ENCODE measurements at regions of chr5 and their contacts with region 1.

Region 1: DNA sequence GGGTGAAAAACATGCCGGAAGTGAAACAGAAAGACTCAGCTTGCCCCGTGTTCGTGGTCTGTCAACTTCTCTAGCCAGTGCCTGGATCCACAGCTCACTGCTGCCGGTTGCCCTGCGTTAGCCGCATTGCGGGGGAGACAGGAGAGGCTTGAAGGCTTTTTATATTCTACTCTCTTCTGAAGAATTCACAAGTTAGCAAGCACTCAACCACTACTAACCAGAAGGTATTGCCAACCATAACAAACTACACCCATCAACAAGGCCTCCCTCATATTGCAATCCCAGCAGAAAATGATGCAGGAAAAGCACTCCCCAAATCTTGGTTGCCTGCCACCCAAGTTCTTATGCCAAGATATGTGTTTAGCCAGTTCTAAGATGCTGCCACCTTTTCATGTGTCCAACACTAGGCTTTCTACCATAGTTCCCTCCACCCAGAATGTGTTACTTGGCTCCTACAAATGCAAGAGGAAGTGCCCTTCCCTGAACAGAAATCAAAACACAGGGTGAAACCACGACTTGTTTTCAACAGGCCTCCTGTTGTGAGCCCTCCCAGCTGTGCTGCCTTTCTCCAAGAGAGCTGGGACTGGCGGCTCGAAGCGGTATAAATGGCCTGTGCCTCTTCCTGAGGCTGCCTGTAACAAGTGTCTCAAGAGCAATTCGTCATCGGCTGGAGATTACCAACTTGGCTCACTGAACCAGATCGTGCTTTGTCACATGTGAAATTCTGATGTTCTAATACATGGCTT is 129.0 kb downstream of the SNX18 start:
- DNase-seq: peak; percentile 91
- H3K4me3 Mint-ChIP-seq: no peak overlapping the region
- H3K27ac Mint-ChIP-seq: peak overlapping the region; percentile 44
- H3K4me1 Mint-ChIP-seq: peaks cover 52% of the 10 kb centered on the region
- H3K27me3 Mint-ChIP-seq: no peaks in the 10 kb centered on the region
- CTCF ChIP-seq: no peak

Region 2: GRCh38 chr5:54360089-54360488 is 286.4 kb before region 1 on chr5:
- CTCF ChIA-PET with region 1: no interaction called
- POLR2A ChIA-PET with region 1: no interaction called
- intact Hi-C with region 1: no loop called
- DNase-seq: peak; percentile 63
- H3K4me3 Mint-ChIP-seq: no peak overlapping the region
- H3K27ac Mint-ChIP-seq: no peak overlapping the region
- H3K4me1 Mint-ChIP-seq: peaks cover 15% of the 10 kb centered on the region
- H3K27me3 Mint-ChIP-seq: no peaks in the 10 kb centered on the region
- CTCF ChIP-seq: no peak

Region 3: DNA sequence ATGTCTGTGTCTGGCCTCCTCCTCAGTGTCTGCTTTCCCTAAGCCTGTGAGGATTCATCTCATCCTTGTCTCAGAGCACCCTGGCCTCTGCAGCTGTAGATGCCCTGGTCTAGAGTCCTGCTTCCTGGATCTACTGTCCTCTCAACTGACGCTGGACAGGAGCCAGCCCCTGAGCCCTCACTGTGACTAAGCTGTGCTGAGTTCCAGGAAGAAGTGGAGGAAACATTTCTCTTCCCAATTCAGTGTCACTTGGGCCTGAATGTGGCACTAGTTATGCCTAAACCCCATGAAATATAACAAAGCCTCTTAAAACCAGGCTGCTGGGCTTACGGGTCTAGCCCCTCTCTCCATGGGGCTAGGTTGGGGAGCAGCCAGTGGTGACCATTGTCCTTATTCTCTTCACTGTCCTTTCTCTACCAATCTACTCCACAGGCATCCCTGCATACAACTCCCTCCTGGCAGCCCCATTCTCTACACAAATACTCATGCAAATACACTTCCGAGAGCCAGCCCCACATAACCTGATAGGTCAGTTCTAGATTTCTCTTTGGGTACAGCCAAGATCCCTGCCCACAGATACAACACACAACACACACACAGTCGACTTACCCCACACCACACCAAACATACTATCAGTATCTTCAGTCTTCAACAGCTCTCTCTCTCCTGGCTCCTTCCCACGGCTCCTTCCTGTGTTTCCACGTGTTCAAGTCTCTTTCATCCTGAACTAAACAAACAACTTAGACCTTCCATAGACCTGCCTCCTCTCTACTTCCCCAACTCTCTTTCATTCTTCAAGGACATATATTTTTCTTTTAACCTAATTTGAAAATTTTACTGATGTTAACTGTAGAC is 91.8 kb after region 1 on chr5:
- CTCF ChIA-PET with region 1: no interaction called
- POLR2A ChIA-PET with region 1: interaction called, 3 read pairs
- intact Hi-C with region 1: loop called (anchors 5 kb)
- DNase-seq: peak; percentile 70
- H3K4me3 Mint-ChIP-seq: no peak overlapping the region
- H3K27ac Mint-ChIP-seq: no peak overlapping the region
- H3K4me1 Mint-ChIP-seq: peaks cover 6% of the 10 kb centered on the region
- H3K27me3 Mint-ChIP-seq: no peaks in the 10 kb centered on the region
- CTCF ChIP-seq: no peak

Region 4: GRCh38 chr5:54927097-54927746 is 280.7 kb after region 1 on chr5:
- CTCF ChIA-PET with region 1: no interaction called
- POLR2A ChIA-PET with region 1: no interaction called
- intact Hi-C with region 1: no loop called
- DNase-seq: no peak
- H3K4me3 Mint-ChIP-seq: no peak overlapping the region
- H3K27ac Mint-ChIP-seq: no peak overlapping the region
- H3K4me1 Mint-ChIP-seq: no peaks in the 10 kb centered on the region
- H3K27me3 Mint-ChIP-seq: peaks cover 7% of the 10 kb centered on the region
- CTCF ChIP-seq: no peak

Region 5: GRCh38 chr5:54946306-54946819 is 299.8 kb after region 1 on chr5:
- CTCF ChIA-PET with region 1: no interaction called
- POLR2A ChIA-PET with region 1: no interaction called
- intact Hi-C with region 1: no loop called
- DNase-seq: no peak
- H3K4me3 Mint-ChIP-seq: no peak overlapping the region
- H3K27ac Mint-ChIP-seq: no peak overlapping the region
- H3K4me1 Mint-ChIP-seq: no peaks in the 10 kb centered on the region
- H3K27me3 Mint-ChIP-seq: peaks cover 75% of the 10 kb centered on the region
- CTCF ChIP-seq: no peak